ENCODE measurements at regions of chr5 and their contacts with region 1.

Region 1: GRCh38 chr5:143106174-143106573 is 297.3 kb downstream of the NR3C1 start:
- DNase-seq: peak; percentile 53
- H3K4me3 ChIP-seq: no peak overlapping the region
- H3K27ac ChIP-seq: no peak overlapping the region
- H3K4me1 ChIP-seq: no peaks in the 10 kb centered on the region
- H3K27me3 ChIP-seq: no peaks in the 10 kb centered on the region
- CTCF ChIP-seq: peak in 1 of 2 donors; percentile 32

Region 2: DNA sequence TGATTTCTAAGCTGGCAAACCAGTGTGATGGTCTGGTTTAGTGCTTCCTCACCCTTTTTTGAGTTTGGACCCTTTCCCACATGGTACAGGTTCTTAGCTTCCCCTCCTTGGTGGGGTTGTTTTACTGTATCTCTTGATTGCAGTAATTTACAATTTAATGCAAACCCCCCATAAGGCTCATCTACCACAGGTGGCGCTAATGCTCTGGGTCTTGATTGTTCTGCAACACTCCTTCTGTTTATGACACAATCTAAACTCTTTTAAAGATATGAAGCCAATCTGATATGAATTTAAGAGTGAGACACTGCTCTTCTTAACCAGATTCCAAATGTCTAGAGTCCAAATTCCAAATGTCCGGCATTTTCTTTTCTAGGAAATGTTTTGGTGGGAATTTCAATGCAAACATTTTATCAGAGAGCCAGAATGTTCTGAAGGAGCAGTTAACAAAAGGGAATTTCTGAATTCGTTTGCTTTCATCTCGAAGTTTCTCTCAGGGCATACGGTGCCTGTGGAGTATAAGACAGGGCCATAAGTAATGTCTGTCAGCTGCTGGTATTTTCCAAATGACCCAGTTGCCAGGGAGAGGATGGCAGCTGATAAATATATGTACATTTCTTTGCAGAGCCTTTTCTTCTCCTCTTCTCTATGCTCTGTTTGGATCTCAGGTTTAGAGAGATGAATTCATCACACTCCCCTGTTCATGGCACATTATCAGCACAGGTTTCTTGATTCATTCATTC is 89.2 kb before region 1 on chr5:
- CTCF ChIA-PET with region 1: no interaction called
- dilution Hi-C with region 1: no loop called
- in situ Hi-C with region 1: no loop called
- intact Hi-C with region 1: loop called (anchors 5 kb)
- DNase-seq: peak; percentile 33
- H3K4me3 ChIP-seq: no peak overlapping the region
- H3K27ac ChIP-seq: no peak overlapping the region
- H3K4me1 ChIP-seq: peaks cover 5% of the 10 kb centered on the region
- H3K27me3 ChIP-seq: no peaks in the 10 kb centered on the region
- CTCF ChIP-seq: peak; percentile 79 to 80

Region 3: GRCh38 chr5:143279698-143280097 is 173.5 kb after region 1 on chr5:
- CTCF ChIA-PET with region 1: no interaction called
- dilution Hi-C with region 1: no loop called
- in situ Hi-C with region 1: no loop called
- intact Hi-C with region 1: loop called (anchors 10 kb)
- DNase-seq: no peak
- H3K4me3 ChIP-seq: no peak overlapping the region
- H3K27ac ChIP-seq: no peak overlapping the region
- H3K4me1 ChIP-seq: peaks cover 3% of the 10 kb centered on the region
- H3K27me3 ChIP-seq: no peaks in the 10 kb centered on the region
- CTCF ChIP-seq: no peak